Heart left ventricle (tissue), 16 donors: ENCODE measurements at regions of chr10 and their contacts with region 1.

Region 1: DNA sequence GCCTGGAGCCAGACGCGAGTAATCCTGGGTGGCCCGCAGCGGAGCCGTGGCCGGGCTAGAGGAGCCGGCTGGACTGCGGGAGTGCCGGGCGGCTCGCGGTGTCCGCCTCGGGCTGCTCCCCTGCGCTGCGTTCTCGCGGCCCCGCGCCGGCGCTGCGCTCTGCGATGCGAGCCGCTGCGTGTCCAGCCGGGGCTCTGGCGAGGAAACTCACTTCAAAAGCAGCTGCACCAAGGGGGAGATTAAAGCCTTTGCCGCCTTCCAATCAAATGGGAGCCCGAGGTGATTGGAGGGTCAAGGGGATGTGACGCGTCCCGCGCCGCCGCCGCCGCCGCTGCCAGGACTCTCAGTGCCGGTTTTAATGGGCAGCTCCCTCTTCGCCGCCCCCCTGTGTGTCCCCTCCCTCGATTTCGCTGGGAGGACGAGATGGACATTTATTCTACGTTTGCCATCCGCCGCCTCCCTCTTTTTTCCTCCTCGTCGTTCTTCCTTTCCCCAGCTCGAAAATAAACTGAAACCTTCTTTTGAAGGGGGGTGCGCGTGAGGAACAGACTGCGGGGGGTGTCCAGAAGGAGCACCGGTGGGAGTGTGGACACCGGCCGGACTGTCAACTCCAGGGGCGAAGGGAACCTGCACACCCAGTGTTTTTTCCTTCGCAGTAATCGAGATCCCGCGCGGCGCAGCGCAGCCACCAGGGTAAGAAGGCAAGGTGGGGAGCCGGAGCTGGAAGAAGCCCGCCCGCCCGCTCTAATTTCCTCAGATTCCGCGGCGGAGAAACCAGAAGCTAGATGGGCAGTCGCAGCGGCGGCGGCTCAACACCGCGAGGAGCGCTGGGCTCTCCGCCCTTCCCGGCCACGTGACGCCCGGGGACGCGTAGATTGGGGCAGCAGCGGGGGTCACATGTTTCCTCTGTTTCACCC is at the start of gene ZNF503:
- DNase-seq: peak; percentile 97 to 99 (median 98)
- ATAC-seq: peak; percentile 83 to 92 (median 88)
- H3K4me3 ChIP-seq: peak within 1 kb of the TSS; percentile 74 to 98 (median 92)
- H3K27ac ChIP-seq: peak within 1 kb of the TSS; percentile 81 to 100 (median 97)
- H3K4me1 ChIP-seq: peaks cover 0 to 53% (median 20%) of the 10 kb centered on the region in 12 donors
- H3K27me3 ChIP-seq: peaks cover 0 to 38% (median 0%) of the 10 kb centered on the region in 9 donors
- CTCF ChIP-seq: peak in 7 of 12 donors; percentile 10 to 40 (median 32)
- POLR2A ChIP-seq: peak; percentile 63 to 99
- total RNA-seq, gene ZNF503: 3.4 to 8.6 (median 7.4) TPM

Region 2: GRCh38 chr10:75294866-75295701 is 106.7 kb before region 1 on chr10:
- intact Hi-C with region 1: loop called in 6 of 10 experiments (anchors 5 to 10 kb)
- DNase-seq: peak; percentile 77 to 88 (median 85)
- ATAC-seq: peak; percentile 50 to 89 (median 82)
- H3K4me3 ChIP-seq: peak overlapping the region; percentile 16 to 73 (median 64)
- H3K27ac ChIP-seq: peak overlapping the region; percentile 76 to 96 (median 90)
- H3K4me1 ChIP-seq: peaks cover 0 to 28% (median 19%) of the 10 kb centered on the region in 12 donors
- H3K27me3 ChIP-seq: peaks cover 0 to 5% (median 0%) of the 10 kb centered on the region in 9 donors
- CTCF ChIP-seq: peak in 10 of 12 donors; percentile 15 to 54 (median 38)
- POLR2A ChIP-seq: peak in 1 of 2 donors; percentile 63

Region 3: DNA sequence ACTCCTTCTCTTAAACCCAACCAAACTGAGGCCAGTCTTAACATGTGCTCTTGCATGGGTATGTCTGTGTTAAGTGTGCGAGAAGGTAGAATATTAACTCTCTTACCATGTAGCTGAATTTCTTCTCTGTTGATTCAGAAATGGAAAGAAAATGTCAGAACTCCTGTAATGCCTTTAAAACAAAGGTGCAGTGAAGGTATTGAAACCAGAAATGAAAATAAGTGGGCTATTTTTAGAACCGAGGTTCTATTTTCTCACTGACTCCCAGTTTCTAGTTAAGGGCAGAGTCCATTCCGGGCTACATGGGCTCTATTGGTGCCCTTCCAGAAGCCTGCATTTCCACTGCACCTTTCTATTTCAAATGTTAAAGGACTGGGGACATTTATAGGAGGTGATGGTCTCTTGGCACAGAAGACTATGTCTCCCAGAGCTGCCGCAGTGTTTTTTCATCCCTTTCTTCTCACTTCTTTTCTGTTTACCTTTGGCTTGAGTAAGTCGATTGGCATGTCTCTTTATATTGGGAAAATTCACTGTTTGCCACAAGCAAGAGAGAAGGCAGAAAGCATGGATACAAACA is 204.5 kb after region 1 on chr10:
- intact Hi-C with region 1: loop called in 1 of 10 experiments (anchors 10 kb)
- DNase-seq: no peak
- ATAC-seq: peak in 1 of 4 donors; percentile 36
- H3K4me3 ChIP-seq: no peak overlapping the region
- H3K27ac ChIP-seq: no peak overlapping the region
- H3K4me1 ChIP-seq: peaks cover 0 to 19% (median 2%) of the 10 kb centered on the region in 12 donors
- H3K27me3 ChIP-seq: no peaks in the 10 kb centered on the region
- CTCF ChIP-seq: no peak
- POLR2A ChIP-seq: no peak

Region 4: DNA sequence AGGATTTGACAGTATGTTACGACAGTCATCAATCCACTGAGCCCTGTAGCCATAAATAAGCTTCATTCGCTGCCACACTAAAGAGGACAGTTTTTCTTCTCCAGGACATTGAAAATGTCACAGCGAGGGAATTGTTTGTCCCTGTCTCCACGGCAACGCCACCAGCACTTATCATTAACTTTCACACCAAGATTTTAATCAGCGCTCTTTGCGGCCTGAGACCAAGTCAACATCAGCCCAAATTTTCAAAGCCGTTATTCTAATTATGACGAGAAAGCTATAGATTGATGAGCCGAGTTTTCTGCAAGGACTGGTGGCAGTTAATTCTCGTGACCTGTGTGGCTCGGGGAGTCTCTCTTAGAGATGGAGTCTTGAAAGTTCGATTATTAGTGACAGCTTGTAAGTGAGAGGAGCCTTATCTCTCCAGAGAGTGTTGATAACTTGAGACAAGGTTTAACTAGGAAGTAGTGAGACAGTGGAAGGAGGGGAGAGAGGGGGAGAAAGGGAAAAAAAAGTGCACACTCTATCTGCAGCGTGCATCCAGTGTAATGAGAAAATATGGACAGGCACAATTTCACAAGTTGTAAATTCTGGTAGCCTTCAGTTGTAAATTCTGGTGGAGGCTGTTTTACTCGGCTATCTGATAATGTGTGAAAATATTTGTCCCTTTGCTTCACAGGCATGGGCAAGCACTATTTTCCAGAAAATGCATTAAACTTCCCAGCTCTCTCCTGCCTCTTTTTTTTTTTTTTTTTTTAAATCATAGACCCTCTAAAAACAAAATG is 502.9 kb after region 1 on chr10:
- intact Hi-C with region 1: loop called in 3 of 10 experiments (anchors 2 to 10 kb)
- DNase-seq: no peak
- ATAC-seq: peak in 1 of 4 donors; percentile 41
- H3K4me3 ChIP-seq: peak overlapping the region in 5 of 12 donors; percentile 9 to 36 (median 13)
- H3K27ac ChIP-seq: no peak overlapping the region
- H3K4me1 ChIP-seq: peaks cover 0 to 6% (median 0%) of the 10 kb centered on the region in 12 donors
- H3K27me3 ChIP-seq: no peaks in the 10 kb centered on the region
- CTCF ChIP-seq: no peak
- POLR2A ChIP-seq: no peak

Region 5: DNA sequence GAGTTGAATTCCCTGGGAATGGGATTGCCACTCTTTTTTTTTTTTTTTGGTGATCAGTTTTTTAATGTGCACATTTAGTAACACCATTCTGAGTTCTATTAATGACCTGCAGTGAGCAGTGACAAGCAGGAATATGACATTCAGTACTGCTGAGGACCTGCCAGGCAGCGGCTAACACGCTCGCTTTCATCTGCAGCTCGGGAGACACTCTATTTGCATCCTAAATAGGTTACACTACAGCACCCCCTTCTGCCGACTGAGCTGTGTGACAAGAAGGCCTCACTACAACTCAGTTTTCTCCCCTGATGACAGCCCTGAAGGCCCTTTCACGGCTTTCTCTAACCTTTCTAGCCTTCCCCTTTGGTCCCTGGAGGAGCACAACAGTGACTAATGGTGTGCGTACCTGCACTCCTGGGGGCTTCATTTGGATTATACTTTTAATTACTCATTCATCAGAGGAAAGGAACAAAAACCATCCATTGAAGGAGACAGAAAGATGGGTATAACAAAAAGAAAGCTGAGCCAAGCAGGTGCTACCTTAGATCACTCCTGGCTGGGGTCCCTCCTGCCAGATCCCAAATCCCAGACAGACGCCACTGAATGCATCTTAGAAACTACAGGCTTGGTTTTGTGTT is 902.0 kb after region 1 on chr10:
- intact Hi-C with region 1: loop called in 9 of 10 experiments (anchors 2 to 10 kb)
- DNase-seq: peak; percentile 64 to 85 (median 74)
- ATAC-seq: peak; percentile 95 to 99 (median 98)
- H3K4me3 ChIP-seq: no peak overlapping the region
- H3K27ac ChIP-seq: peak overlapping the region in 3 of 12 donors; percentile 25 to 62 (median 58)
- H3K4me1 ChIP-seq: peaks cover 0 to 30% (median 15%) of the 10 kb centered on the region in 12 donors
- H3K27me3 ChIP-seq: no peaks in the 10 kb centered on the region
- CTCF ChIP-seq: peak; percentile 41 to 75 (median 61)
- POLR2A ChIP-seq: no peak

Region 6: DNA sequence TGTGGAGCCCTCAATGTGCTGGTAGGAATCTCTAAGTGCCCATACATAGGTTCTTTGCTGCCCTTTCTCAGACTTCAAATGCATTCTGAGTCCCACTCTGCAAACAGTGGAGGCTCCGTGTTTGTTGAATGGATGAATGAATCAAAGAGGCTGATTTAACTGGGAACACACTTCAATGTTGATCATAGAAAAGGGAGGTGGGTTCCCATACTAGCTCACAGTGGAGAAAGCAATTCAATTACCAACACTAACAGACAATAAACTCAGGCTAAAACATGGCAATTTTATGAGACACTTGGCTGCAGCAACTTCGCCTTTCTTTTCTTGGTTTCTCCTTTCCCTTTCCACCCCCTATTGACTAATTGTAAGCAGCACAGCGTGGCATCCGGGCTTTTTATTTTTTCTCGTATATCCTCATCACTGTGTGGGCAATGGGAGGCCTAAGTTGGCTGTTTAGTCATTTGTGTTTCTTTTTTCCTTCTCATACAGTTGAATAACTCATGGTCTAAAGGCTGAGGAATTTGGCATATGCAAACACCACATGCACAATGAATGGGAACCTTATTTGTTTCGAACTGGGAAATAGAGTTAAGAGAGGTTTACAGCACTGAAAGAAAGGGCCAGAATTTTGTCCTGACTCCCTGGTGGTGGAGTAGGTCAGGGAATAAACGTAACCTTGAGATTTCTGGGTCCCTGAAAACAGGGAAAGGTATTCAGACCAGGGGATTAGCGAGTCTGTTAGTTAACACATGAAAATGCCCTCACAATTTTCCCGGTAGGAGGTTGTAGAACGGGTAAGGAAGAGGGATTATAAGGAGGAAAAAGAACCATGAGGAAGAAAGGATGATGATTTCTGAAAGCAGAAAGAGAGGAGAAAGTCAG is 1377.3 kb after region 1 on chr10:
- intact Hi-C with region 1: loop called in 1 of 10 experiments (anchors 5 kb)
- DNase-seq: no peak
- ATAC-seq: no peak
- H3K4me3 ChIP-seq: no peak overlapping the region
- H3K27ac ChIP-seq: peak overlapping the region in 2 of 12 donors; percentile 21 to 55
- H3K4me1 ChIP-seq: peaks cover 0 to 24% (median 0%) of the 10 kb centered on the region in 12 donors
- H3K27me3 ChIP-seq: no peaks in the 10 kb centered on the region
- CTCF ChIP-seq: peak in 2 of 12 donors; percentile 14 to 27
- POLR2A ChIP-seq: no peak